A549 (cell line): ENCODE measurements at regions of chr13 and their contacts with region 1.

Region 1: DNA sequence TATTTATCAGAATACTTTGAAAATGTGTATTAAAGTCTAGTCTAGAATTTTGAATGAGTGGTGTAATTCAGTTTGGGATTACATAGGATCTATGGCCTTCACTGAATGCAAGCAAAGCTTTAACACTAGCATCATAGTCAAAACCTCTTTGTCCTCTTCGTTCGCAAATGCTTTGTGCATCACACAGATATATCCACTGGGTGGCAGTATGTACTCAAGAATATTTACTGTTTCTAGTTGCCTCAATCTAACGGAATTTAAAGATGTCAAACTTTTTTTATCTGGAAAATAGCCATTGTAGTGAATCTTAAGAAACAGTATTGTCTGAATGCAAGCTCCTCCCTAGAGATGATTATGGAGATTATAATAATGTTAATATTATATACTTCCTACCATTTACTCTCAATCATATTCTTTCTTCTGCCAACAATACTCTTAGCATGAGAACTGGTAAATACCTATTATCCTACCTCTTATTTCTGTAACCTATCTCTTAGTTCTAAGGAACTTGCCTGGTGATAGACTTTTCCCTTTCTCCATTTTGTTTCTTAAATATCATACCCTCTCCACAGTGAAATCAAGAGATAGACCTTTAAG is 25.8 kb downstream of the LACC1 start:
- DNase-seq: peak in 1 of 2 experiments; percentile 59
- ATAC-seq: peak; percentile 50 to 79; a peak in 5 of 6 replicates
- H3K4me3 ChIP-seq: no peak overlapping the region
- H3K27ac ChIP-seq: no peak overlapping the region
- H3K4me1 ChIP-seq: peaks cover 23% of the 10 kb centered on the region
- CTCF ChIP-seq: peak; percentile 74
- EP300 ChIP-seq: no peak
- POLR2A ChIP-seq: no peak
- RAD21 ChIP-seq: peak; percentile 82 to 86

Region 2: GRCh38 chr13:43878892-43879754 is 26.4 kb before region 1 on chr13 and contains the start of gene CCDC122:
- CTCF ChIA-PET with region 1: no interaction called
- POLR2A ChIA-PET with region 1: no interaction called
- DNase-seq: peak; percentile 66 to 75
- ATAC-seq: peak; percentile 96 to 97
- H3K4me3 ChIP-seq: peak within 1 kb of the TSS; percentile 80
- H3K27ac ChIP-seq: peak within 1 kb of the TSS; percentile 95 to 96
- H3K4me1 ChIP-seq: peaks cover 11% of the 10 kb centered on the region; the same call in 2 of the 3 replicates
- CTCF ChIP-seq: no peak
- EP300 ChIP-seq: no peak
- POLR2A ChIP-seq: peak; percentile 52
- RAD21 ChIP-seq: no peak
- polyA plus RNA-seq, gene CCDC122: 2.6 and 2.7 TPM in 2 replicates

Region 3: GRCh38 chr13:43920965-43921674 is 15.6 kb after region 1 on chr13:
- CTCF ChIA-PET with region 1: interaction called, 12 read pairs
- POLR2A ChIA-PET with region 1: no interaction called
- DNase-seq: no peak
- ATAC-seq: no peak
- H3K4me3 ChIP-seq: no peak overlapping the region
- H3K27ac ChIP-seq: no peak overlapping the region
- H3K4me1 ChIP-seq: no peaks in the 10 kb centered on the region
- CTCF ChIP-seq: no peak
- EP300 ChIP-seq: no peak
- POLR2A ChIP-seq: no peak
- RAD21 ChIP-seq: no peak

Region 4: GRCh38 chr13:44449999-44450708 is 544.6 kb after region 1 on chr13:
- CTCF ChIA-PET with region 1: interaction called, 12 read pairs
- POLR2A ChIA-PET with region 1: no interaction called
- DNase-seq: no peak
- ATAC-seq: no peak; a peak in 1 of 6 replicates
- H3K4me3 ChIP-seq: no peak overlapping the region
- H3K27ac ChIP-seq: peak overlapping the region in 1 of 2 experiments; percentile 11; a peak in 1 of 6 replicates
- H3K4me1 ChIP-seq: peaks cover 13% of the 10 kb centered on the region; the same call in 1 of the 3 replicates
- CTCF ChIP-seq: no peak
- EP300 ChIP-seq: no peak
- POLR2A ChIP-seq: no peak
- RAD21 ChIP-seq: no peak

Region 5: GRCh38 chr13:44458313-44458975 is 552.9 kb after region 1 on chr13:
- CTCF ChIA-PET with region 1: interaction called, 12 read pairs
- POLR2A ChIA-PET with region 1: no interaction called
- DNase-seq: no peak
- ATAC-seq: no peak
- H3K4me3 ChIP-seq: no peak overlapping the region
- H3K27ac ChIP-seq: no peak overlapping the region
- H3K4me1 ChIP-seq: 0 out of 3 replicates have a peak, but pooled peaks cover 4% of the 10 kb centered on the region
- CTCF ChIP-seq: no peak
- EP300 ChIP-seq: no peak
- POLR2A ChIP-seq: no peak
- RAD21 ChIP-seq: no peak

Region 6: DNA sequence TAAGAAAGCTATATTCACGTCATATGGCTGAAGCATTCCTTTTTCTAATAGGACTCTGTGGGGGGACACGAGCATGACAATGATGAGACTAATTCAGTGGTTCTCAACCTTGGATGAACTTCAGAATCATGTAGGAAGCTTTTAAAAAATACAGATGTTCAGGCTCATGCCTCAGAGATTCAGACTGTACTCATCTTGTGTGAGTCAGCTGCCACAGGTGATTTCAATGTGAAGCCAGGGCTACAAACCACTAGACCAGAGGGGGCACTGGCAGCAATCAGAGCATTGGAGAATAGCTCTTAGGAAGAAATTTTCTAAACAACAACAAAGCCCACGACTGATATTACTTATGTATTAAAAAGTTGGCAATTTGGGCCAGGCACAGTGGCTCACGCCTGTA is 559.8 kb after region 1 on chr13:
- CTCF ChIA-PET with region 1: interaction called, 24 read pairs
- POLR2A ChIA-PET with region 1: no interaction called
- DNase-seq: no peak
- ATAC-seq: no peak
- H3K4me3 ChIP-seq: no peak overlapping the region
- H3K27ac ChIP-seq: no peak overlapping the region
- H3K4me1 ChIP-seq: no peaks in the 10 kb centered on the region
- CTCF ChIP-seq: no peak
- EP300 ChIP-seq: no peak
- POLR2A ChIP-seq: no peak
- RAD21 ChIP-seq: no peak

Region 7: DNA sequence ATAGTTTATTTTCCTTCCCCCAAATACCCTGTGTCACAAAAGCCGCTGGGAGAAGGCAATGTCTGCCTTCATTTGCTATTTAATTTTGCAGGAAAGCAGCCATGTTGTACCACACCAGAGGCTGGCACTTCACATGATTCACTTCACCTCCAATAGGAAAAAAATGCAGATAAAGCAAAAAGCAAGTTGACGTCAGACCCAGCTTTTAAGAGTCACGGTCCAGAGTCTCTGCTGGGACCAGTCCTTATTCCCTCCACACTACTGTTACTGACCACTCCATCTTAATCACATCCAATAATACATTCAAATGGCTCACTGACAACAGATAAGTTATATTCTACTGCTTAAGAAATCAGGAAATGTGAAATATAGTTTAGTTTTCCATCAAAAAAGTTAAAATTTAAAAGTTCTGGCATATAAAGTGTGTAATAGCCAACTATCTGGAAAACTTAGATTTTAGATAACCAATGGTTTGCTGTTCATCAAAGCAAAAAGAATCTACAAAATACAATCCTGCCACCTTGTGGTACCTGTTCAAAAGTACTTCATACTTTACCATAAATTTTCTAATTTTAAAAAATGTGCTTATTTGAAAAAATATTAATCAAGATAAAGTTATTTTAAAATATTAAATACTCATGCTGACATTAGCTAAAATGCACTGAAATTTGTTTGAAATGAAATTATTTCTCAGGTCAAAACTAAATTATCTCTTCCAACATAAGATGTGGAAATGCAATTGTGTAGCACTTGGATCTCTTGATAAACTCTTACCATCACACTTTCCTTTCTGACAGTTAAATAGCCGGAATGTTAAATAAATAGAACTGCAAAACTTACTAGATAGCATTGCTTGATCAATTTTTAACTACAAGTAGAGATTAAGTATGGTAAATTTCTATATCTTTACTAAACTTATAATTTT is 565.4 kb after region 1 on chr13:
- CTCF ChIA-PET with region 1: interaction called, 24 read pairs
- POLR2A ChIA-PET with region 1: no interaction called
- DNase-seq: peak in 1 of 2 experiments; percentile 36
- ATAC-seq: no peak
- H3K4me3 ChIP-seq: no peak overlapping the region
- H3K27ac ChIP-seq: peak overlapping the region in 1 of 2 experiments; percentile 52; a peak in 2 of 6 replicates
- H3K4me1 ChIP-seq: peaks cover 40% of the 10 kb centered on the region
- CTCF ChIP-seq: peak; percentile 55
- EP300 ChIP-seq: no peak
- POLR2A ChIP-seq: no peak
- RAD21 ChIP-seq: peak; percentile 61 to 69